AG04449 (cell line): ENCODE measurements at regions of chr11 and their contacts with region 1.

Region 1: DNA sequence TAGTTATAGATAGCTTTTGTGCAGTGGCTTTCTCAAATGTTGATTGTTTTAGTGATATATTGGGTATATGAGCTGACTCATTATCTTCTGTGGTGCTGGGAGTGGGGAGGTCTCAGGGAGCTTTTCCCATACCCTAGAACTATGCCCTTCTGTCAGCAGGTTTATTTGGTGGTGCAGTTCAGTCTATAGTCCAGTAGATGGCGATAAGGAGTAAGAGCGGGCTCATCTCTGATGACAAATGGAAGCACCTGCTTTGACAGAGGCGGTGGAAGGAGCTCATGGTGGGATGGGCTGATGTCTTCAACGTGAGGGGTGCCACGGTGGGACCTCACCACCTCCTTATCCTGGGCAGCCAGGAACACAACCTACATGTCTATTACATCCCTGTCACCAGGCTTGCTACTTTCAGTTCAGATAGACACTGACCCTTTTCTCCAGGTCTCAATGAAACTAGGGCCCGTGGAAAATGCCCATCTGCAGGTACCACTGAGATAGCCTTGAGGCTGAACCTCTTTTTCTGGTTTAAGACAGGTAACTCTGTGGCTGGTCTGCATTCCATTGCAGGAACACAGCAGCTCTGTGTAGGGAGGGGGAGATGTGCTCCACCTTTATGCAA is 13.0 kb upstream of the OR6A2 start:
- DNase-seq: no peak
- H3K4me3 ChIP-seq: no peak overlapping the region
- CTCF ChIP-seq: peak; percentile 78

Region 2: GRCh38 chr11:6646918-6647679 is 165.4 kb before region 1 on chr11:
- CTCF ChIA-PET with region 1: no interaction called
- POLR2A ChIA-PET with region 1: no interaction called
- DNase-seq: no peak
- H3K4me3 ChIP-seq: no peak overlapping the region; the same call in 1 of the 2 replicates
- CTCF ChIP-seq: no peak

Region 3: GRCh38 chr11:6757373-6757967 is 55.0 kb before region 1 on chr11:
- CTCF ChIA-PET with region 1: interaction called, 10 read pairs
- POLR2A ChIA-PET with region 1: no interaction called
- DNase-seq: peak; percentile 12
- H3K4me3 ChIP-seq: no peak overlapping the region
- CTCF ChIP-seq: peak; percentile 62

Region 4: DNA sequence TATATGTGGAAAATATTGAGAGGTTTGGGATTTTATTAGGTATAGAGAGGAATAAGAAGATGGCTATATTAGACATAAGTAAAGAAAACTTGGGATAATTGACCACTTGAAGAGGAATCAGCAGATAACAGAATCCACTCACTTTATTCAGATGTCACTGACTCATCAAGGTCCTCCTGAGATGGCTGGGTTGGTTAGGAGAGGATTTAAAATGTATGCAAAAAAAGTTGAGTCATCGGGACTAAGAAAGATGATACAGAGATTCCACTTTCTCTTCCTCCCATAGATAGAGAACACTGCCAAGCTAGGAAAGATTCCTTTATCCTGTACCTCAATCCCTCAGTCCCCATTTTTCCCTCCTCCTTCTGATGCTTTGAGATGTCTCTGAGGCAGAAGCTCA is 13.1 kb before region 1 on chr11 and contains the start of gene OR6A2:
- CTCF ChIA-PET with region 1: interaction called, 11 read pairs
- POLR2A ChIA-PET with region 1: no interaction called
- DNase-seq: no peak
- H3K4me3 ChIP-seq: no peak within 1 kb of the TSS
- CTCF ChIP-seq: no peak

Region 5: DNA sequence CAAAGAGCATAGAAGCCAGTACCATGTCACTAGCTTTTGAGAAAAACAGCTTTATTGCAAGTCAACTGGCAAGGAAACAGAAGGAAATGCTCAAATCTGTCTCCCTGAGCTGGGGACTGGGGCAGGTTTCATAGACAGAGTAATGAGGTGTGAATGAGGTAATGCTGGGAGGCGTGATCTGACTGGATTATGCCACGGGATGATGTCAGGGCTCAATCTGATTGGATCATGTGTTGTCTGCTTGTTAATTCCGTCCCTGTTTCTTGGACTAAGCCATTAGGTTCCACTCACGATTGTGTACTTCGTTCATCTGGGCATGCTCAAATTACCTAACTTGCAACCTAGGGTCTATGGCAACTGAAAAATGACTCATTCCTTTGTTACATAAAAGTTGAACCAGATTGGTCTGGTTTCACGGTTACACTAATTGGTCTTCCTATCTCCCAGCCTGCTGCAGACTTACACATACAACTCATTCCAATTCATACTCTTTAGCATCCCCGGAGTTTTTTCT is 12.8 kb after region 1 on chr11:
- CTCF ChIA-PET with region 1: interaction called, 14 read pairs
- POLR2A ChIA-PET with region 1: no interaction called
- DNase-seq: no peak
- H3K4me3 ChIP-seq: no peak overlapping the region
- CTCF ChIP-seq: no peak

Region 6: DNA sequence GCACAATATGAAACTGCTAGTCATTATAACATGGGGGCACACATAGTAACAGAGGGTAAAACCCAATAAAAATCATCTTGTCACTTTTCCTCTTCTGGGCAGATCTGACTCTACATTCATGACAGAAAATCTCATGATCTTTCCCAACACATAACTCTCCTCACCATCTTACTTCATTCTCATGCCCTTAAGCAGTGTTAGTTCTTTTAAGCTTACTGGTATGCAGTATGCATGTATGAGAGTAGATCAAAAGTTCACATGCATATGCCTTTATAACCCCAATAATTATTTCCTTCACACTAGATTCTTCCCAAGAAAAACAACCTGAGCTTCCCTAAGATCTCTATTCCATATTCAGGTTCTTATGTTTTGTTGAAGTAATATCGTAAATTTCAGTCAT is 58.8 kb after region 1 on chr11:
- CTCF ChIA-PET with region 1: no interaction called
- POLR2A ChIA-PET with region 1: no interaction called
- DNase-seq: no peak
- H3K4me3 ChIP-seq: no peak overlapping the region
- CTCF ChIP-seq: no peak

Region 7: GRCh38 chr11:6992457-6993417 is 180.2 kb after region 1 on chr11:
- CTCF ChIA-PET with region 1: interaction called, 21 read pairs
- POLR2A ChIA-PET with region 1: no interaction called
- DNase-seq: peak; percentile 89
- H3K4me3 ChIP-seq: no peak overlapping the region; the same call in none of the 2 replicates
- CTCF ChIP-seq: no peak

Region 8: DNA sequence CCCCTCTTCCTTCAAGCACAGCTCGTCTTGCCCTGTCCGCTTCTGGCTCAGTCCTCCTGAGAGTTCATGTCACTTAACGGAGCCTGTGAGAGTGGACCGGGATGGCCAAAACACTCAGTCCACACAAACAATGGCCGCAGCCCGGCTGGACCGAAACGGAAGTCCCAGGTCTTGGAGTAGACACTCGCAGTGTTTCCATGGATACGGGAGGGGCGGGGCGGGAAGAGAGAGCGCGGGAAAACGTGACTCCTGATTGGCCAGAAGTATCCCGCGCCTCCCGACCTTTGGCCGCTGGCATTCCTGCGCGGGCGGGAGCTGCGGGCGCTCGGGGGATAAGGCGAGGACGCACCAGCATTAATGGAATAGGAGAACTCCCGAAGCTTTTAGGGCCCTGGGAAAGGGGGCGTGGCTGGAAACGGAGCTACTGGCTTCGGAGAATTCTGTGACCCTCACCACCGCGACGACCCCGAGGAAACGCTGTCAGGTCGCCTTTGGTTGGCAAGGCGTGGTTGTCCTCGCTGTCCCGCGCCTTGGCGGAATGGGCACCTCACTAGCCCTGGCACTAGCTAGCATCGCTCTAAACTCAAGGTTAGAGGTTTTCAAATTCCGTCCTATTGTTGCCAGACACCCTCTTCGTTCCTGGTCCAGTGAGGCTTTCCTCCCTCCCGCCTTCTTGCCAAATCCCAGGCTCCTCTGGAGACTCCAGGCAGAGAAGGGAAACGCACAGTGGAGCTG is 207.9 kb after region 1 on chr11 and contains the starts of genes NLRP14 and ZNF214:
- CTCF ChIA-PET with region 1: interaction called, 15 read pairs
- POLR2A ChIA-PET with region 1: no interaction called
- DNase-seq: peak; percentile 46
- H3K4me3 ChIP-seq: peak within 1 kb of the TSS; percentile 84
- CTCF ChIP-seq: no peak

Region 9: GRCh38 chr11:7278314-7278917 is 465.9 kb after region 1 on chr11:
- CTCF ChIA-PET with region 1: interaction called, 11 read pairs
- POLR2A ChIA-PET with region 1: no interaction called
- DNase-seq: no peak
- H3K4me3 ChIP-seq: no peak overlapping the region
- CTCF ChIP-seq: peak; percentile 58